ENCODE measurements at regions of chr1 and their contacts with region 1.

Region 1: DNA sequence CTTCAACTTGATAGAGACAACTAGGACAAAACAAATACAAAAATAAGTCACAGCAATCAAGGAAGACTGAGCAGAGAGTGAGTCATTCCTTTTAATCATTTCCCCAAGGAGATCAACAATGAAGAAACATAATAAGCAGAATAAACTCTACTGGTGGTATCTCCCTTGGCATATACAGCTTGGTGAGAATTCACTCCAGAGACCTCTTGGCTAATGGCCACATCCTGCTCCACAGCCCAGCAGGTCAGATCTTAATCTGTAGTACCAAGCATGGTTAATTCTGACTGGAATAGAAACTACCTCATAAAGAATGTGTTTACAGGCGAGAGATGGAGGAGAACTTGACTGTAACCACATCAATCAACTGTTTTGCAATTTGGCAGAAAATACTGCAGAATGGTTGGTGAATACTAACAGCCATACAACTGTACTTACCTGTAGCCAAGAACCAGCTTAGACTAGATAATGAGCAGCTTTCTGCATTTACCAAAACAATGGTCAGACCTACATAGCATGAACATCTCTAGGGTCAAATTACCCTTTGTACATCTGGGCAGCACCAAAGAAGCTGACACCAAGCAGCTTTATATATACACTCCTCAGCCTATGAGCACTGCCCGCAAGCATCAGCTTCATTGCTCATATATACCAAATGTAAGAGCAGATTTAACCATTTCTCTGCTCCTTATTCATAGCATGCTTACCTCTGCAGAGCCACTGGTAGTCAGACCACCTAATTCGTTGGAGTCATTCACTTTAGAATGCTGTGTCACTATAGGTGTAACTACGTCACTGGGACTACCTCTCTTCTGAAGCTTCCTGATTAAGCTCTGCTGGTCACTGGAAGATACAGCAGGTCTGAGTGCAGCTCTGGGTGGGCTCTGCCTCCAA is 51.0 kb downstream of the KIAA0319L start:
- DNase-seq: peak in 8 of 9 donors; percentile 29 to 73 (median 56)
- ATAC-seq: peak; percentile 84
- H3K4me3 ChIP-seq: peak overlapping the region; percentile 16
- H3K4me3 Mint-ChIP-seq: peak overlapping the region; percentile 75 to 84 (median 78)
- H3K27ac ChIP-seq: peak overlapping the region; percentile 60
- H3K27ac Mint-ChIP-seq: peak overlapping the region; percentile 73 to 97 (median 93)
- H3K4me1 ChIP-seq: peaks cover 32 to 45% of the 10 kb centered on the region in 2 donors
- H3K4me1 Mint-ChIP-seq: peaks cover 44 to 85% (median 82%) of the 10 kb centered on the region in 7 donors
- H3K27me3 ChIP-seq: no peaks in the 10 kb centered on the region
- H3K27me3 Mint-ChIP-seq: no peaks in the 10 kb centered on the region

Region 2: DNA sequence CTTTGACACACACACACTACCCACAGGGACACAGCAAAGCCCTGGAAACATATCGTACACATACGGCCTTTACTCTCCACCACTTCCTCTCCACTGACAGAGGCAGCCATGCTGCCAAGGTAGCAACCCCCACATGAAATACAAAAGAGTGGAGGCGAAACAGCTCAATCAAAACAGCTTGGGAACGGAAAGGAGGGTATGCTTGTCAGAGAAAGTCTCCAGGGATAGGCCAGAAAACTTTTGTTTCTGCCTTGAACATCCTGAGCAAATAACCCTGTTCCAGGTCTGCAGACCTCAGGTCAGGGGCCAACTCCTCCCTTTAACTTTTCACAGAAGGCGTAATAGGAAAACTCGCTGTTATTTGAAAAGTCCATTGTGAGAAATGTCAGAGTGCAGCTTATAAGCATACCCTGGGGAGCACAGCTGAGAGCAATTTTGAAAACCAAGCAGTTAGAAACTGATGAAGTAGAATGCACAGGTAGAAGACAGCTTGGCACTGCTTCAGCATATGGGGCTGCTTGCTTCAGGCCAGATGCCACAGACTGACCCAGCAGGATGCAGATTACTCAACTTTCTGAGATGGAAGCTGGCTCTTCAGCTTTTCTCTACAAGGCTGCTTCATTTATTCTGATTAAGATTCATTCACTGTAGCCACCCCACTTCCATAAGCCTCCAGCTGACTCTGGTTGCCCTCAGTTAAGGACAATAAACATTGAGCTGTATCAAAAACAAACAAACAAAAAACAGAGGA is 33.1 kb after region 1 on chr1:
- CTCF ChIA-PET with region 1: interaction called, 4 read pairs
- POLR2A ChIA-PET with region 1: interaction called, 22 read pairs
- intact Hi-C with region 1: loop called (anchors 1 kb)
- DNase-seq: peak in 8 of 9 donors; percentile 30 to 88 (median 79)
- ATAC-seq: peak; percentile 90
- H3K4me3 ChIP-seq: peak overlapping the region; percentile 29
- H3K4me3 Mint-ChIP-seq: peak overlapping the region; percentile 54 to 93 (median 82)
- H3K27ac ChIP-seq: peak overlapping the region; percentile 65
- H3K27ac Mint-ChIP-seq: peak overlapping the region; percentile 89 to 100 (median 93)
- H3K4me1 ChIP-seq: peaks cover 35 to 55% of the 10 kb centered on the region in 2 donors
- H3K4me1 Mint-ChIP-seq: peaks cover 53 to 94% (median 87%) of the 10 kb centered on the region in 7 donors
- H3K27me3 ChIP-seq: no peaks in the 10 kb centered on the region
- H3K27me3 Mint-ChIP-seq: no peaks in the 10 kb centered on the region

Region 3: GRCh38 chr1:35564037-35564883 is 58.1 kb after region 1 on chr1:
- CTCF ChIA-PET with region 1: interaction called, 4 read pairs
- POLR2A ChIA-PET with region 1: no interaction called
- intact Hi-C with region 1: loop called in 1 of 2 experiments (anchors 2 kb)
- DNase-seq: peak; percentile 58 to 82 (median 70)
- ATAC-seq: peak; percentile 79
- H3K4me3 ChIP-seq: no peak overlapping the region
- H3K4me3 Mint-ChIP-seq: peak overlapping the region in 1 of 10 donors; percentile 56
- H3K27ac ChIP-seq: no peak overlapping the region
- H3K27ac Mint-ChIP-seq: peak overlapping the region in 7 of 9 donors; percentile 23 to 91 (median 60)
- H3K4me1 ChIP-seq: no peaks in the 10 kb centered on the region
- H3K4me1 Mint-ChIP-seq: peaks cover 25 to 41% (median 31%) of the 10 kb centered on the region in 7 donors
- H3K27me3 ChIP-seq: no peaks in the 10 kb centered on the region
- H3K27me3 Mint-ChIP-seq: no peaks in the 10 kb centered on the region